Activated CD8-positive, alpha-beta T cell treated with anti-CD3 and anti-CD28 coated beads, Interleukin-2, amount 10 ng/mL, durations not matched to agents 7 days and 5 days (primary cell): ENCODE measurements at regions of chr6 and their contacts with region 1.

Region 1: GRCh38 chr6:157184202-157185020 is 138.9 kb downstream of the TMEM242 start:
- DNase-seq: peak; percentile 67
- ATAC-seq: peak; percentile 74
- H3K4me3 Mint-ChIP-seq: no peak overlapping the region
- H3K27ac Mint-ChIP-seq: peak overlapping the region; percentile 64
- H3K4me1 Mint-ChIP-seq: peaks cover 14% of the 10 kb centered on the region
- H3K27me3 Mint-ChIP-seq: no peaks in the 10 kb centered on the region

Region 2: DNA sequence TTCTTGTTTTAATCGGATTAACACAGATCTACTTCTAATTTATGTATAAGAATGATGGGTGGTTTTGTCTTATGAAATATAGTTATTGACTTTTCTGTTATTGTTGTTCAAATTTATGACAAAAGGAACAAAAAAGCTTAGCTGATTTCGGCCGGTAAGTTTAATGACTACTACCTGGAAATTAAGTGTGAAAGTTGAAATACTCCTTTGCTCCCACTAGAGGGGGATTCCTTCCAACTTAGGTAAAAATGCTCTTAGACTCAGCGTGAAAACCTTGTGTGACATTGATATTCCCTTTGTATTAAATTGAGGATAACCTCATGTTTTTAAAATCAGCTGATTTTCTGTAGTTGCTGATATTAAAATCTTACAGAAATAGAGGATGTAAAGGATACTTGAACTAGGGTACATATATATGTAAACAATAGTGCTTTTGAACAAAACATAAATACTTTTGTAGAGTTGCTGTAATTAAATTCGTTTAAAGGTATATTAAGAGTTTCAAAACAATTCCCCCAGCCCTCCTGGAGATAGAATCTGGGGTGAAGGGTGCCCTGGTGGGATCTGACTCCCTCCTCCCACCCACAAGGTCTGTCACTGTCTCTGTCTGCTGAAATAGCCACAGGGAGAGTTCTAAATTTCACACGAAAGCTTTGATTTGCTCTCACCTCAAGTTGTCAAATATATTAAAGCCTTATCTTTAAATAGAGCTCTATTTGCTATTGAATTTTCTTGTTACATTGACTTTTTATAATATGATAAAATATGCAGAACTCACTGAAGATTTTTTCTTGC is 149.8 kb before region 1 on chr6:
- CTCF ChIA-PET with region 1: interaction called, 24 read pairs
- POLR2A ChIA-PET with region 1: no interaction called
- DNase-seq: no peak
- ATAC-seq: peak; percentile 52
- H3K4me3 Mint-ChIP-seq: peak overlapping the region; percentile 47
- H3K27ac Mint-ChIP-seq: no peak overlapping the region
- H3K4me1 Mint-ChIP-seq: peaks cover 18% of the 10 kb centered on the region
- H3K27me3 Mint-ChIP-seq: no peaks in the 10 kb centered on the region

Region 3: DNA sequence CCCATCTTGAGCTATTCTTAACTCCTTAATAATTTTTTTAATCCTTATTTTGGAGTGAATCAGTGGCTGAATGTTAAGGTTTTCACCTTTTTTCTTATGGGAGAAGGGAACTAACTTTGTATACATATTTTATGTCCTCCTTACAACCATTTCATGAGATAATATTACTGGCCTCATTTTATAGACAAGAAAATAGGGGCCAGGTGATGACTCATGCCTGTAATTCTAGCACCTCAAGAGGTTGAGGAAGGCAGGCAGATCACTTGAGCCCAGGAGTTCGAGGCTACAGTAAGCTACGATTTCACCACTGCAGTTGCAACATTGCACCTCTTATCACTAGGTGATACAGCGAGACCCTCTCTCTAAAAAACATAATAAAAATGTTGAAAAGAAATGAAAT is 10.2 kb after region 1 on chr6:
- CTCF ChIA-PET with region 1: interaction called, 16 read pairs
- POLR2A ChIA-PET with region 1: no interaction called
- DNase-seq: no peak
- ATAC-seq: no peak
- H3K4me3 Mint-ChIP-seq: no peak overlapping the region
- H3K27ac Mint-ChIP-seq: no peak overlapping the region
- H3K4me1 Mint-ChIP-seq: peaks cover 6% of the 10 kb centered on the region
- H3K27me3 Mint-ChIP-seq: no peaks in the 10 kb centered on the region